Activated CD4-positive, alpha-beta T cell treated with anti-CD3 and anti-CD28 coated beads, Interleukin-2, amount 10 ng/mL, durations not matched to agents 7 days and 5 days (primary cell): ENCODE measurements at regions of chr18 and their contacts with region 1.

Region 1: GRCh38 chr18:46657115-46657955 is at the start of gene LOXHD1:
- DNase-seq: no peak
- H3K4me3 Mint-ChIP-seq: no peak within 1 kb of the TSS
- H3K27ac Mint-ChIP-seq: peak within 1 kb of the TSS; percentile 73
- H3K4me1 Mint-ChIP-seq: no peaks in the 10 kb centered on the region
- H3K27me3 Mint-ChIP-seq: peaks cover 6% of the 10 kb centered on the region
- total RNA-seq, gene LOXHD1: 0.25 to 0.35 TPM

Region 2: DNA sequence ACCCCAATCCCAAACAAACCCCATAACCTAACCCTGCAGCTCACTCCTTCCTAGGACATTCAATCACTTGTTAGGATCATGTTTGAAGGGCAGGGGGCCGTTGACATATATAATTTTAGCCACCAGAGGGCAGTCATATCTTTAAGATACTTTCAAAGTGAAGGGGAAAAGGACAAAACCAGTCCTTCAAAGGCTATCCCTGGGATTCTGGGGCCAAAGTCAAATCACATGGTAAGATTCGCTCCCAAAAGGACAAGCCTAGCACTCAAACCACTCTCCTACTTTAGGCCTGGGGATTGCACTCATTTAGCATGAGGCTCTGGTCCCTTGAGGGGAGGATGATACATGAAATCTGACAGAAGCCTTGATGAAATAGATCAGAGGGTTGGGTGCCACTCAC is 508.5 kb before region 1 on chr18:
- CTCF ChIA-PET with region 1: interaction called, 11 read pairs
- POLR2A ChIA-PET with region 1: no interaction called
- DNase-seq: peak; percentile 67
- H3K4me3 Mint-ChIP-seq: no peak overlapping the region
- H3K27ac Mint-ChIP-seq: peak overlapping the region; percentile 76
- H3K4me1 Mint-ChIP-seq: peaks cover 49% of the 10 kb centered on the region
- H3K27me3 Mint-ChIP-seq: no peaks in the 10 kb centered on the region

Region 3: GRCh38 chr18:46281185-46282176 is 375.9 kb before region 1 on chr18:
- CTCF ChIA-PET with region 1: interaction called, 16 read pairs
- POLR2A ChIA-PET with region 1: no interaction called
- DNase-seq: peak; percentile 64
- H3K4me3 Mint-ChIP-seq: no peak overlapping the region
- H3K27ac Mint-ChIP-seq: no peak overlapping the region
- H3K4me1 Mint-ChIP-seq: peaks cover 10% of the 10 kb centered on the region
- H3K27me3 Mint-ChIP-seq: no peaks in the 10 kb centered on the region